ENCODE measurements at regions of chr17 and their contacts with region 1.

Region 1: DNA sequence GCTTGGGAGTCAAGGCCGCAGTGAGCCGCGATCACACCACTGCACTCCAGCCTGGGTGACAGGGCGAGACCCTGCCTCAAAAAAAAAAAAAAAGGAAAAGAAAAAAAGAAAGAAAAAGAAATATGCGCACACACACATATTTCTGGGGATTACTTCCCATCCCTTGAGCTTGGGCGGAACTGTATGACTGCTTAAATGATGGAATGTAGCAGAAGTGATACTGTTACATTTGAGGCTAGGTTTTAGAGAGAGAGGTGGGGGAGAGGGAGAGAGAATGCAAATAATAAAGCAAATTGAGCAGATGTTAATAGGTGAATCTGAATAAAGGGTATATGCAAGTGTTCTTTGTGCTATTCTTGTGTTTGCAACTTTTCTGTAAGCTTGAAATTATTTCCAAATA is 12.0 kb upstream of the USP32 start:
- DNase-seq: no peak
- H3K4me3 ChIP-seq: no peak overlapping the region
- CTCF ChIP-seq: no peak

Region 2: GRCh38 chr17:60421273-60421934 is 17.4 kb after region 1 on chr17:
- CTCF ChIA-PET with region 1: interaction called, 18 read pairs
- POLR2A ChIA-PET with region 1: no interaction called
- DNase-seq: no peak
- H3K4me3 ChIP-seq: peak overlapping the region; percentile 60
- CTCF ChIP-seq: peak; percentile 84

Region 3: DNA sequence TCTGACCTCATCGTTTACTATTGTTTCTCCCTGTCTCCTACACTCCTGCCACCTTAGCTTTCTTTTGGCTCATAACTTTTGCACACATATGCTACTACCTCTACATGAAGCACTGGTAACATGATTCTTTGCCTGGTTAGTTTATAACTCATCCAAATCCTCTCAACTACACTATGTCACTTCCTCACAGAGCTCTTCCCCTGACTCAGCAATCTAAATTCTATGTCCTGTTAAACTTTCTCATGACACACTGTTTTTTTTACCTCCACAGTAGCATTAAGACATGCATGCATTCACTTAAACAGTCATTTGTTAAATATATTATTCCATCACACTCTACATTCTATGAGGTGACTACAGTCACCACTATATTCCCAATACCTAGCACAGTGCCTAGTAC is 102.3 kb after region 1 on chr17:
- CTCF ChIA-PET with region 1: no interaction called
- POLR2A ChIA-PET with region 1: no interaction called
- DNase-seq: peak; percentile 62
- H3K4me3 ChIP-seq: no peak overlapping the region
- CTCF ChIP-seq: no peak

Region 4: DNA sequence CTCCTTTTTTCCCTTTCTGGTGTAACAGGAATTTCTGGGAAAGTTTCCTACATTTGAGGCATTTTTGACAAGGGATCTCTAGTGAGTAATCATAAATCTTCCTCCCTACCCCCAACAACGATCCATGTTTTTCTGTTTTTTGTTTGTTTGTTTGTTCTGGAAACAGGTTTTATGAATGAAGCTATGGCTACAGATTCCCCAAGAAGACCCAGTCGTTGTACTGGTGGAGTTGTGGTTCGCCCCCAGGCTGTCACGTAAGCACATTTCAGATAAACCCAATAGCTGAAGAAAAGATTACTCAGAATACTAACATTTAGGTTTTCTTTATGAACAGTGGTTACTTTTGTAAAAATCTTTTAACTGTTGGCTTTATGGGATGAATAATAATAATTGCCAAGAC is 275.3 kb after region 1 on chr17:
- CTCF ChIA-PET with region 1: no interaction called
- POLR2A ChIA-PET with region 1: no interaction called
- DNase-seq: no peak
- H3K4me3 ChIP-seq: no peak overlapping the region
- CTCF ChIP-seq: no peak